ENCODE measurements at regions of chr12 and their contacts with region 1.

Region 1: DNA sequence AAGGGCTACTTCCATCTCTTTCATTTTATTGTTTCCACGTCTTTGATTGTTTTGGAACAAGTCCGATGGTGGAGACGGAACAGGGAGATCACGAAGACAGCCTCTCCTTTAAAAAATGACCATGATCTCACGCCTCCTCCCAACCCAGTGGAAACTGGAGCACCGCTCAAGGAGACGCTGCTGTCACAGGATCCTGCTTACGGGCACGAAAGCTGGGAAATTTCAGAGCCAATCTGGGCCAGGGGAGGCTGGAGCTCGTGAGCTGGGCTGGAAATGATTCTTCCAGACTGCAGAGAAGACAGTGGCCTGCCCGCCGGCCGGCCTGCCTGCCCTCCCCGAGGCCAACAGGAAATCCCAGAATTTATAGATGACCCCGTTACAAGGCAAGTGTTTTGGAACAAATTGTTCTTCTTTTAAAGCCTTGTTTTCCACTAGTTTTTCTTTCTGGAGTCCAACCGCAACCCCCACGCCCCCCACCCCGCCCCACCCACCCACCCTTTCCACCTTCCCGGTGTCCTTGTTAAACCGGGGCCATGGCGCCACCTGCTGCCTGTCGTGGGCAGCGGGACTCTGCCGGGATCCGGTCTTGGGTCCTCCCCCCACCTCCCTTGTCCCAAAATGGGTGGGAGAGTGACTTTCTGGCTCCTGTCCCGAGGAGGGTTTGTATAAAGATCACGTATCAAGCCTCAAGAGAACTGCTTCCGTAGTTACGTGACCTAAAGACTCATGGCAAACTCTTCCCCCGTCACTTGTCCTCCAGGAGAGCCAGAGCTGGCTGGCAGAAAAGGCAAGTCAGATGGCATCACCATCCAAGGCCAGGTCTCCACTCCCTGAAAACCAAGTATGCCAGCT is 40.3 kb downstream of the MAP1LC3B2 start:
- DNase-seq: peak; percentile 24 to 92
- H3K4me3 ChIP-seq: peak overlapping the region; percentile 43 to 59
- H3K27ac ChIP-seq: peak overlapping the region; percentile 73 to 79
- H3K4me1 ChIP-seq: peaks cover 4 to 22% of the 10 kb centered on the region in 2 donors
- H3K27me3 ChIP-seq: no peaks in the 10 kb centered on the region
- CTCF ChIP-seq: peak; percentile 22 to 86 (median 74)

Region 2: DNA sequence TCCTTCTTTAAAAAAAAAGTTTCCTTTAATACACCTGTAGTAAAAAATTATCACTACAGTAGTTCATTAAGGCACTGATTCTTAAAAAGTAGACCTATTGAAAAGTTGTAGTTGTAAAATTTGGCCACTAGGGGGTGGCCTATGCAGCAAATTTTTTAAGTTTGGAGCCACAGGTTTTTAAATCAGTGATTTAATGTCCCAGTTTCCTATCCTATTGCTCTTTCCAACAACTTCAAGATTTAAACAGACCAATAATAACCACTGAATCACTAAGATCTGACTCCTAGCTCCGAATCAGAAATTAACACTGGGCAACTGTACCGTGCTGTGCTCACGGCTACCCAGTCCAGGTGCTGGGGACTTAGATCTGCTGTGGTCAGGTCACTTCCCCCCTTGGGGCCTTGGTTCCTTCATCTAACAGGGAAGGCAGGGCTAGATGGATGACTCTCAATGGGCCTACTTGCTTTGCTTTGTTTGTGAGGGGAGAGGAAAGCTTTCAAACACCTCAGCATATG is 601.3 kb before region 1 on chr12:
- intact Hi-C with region 1: loop called (anchors 2 kb)
- DNase-seq: no peak
- H3K4me3 ChIP-seq: no peak overlapping the region
- H3K27ac ChIP-seq: peak overlapping the region in 1 of 2 donors; percentile 22
- H3K4me1 ChIP-seq: peaks cover 0 to 10% of the 10 kb centered on the region in 2 donors
- H3K27me3 ChIP-seq: no peaks in the 10 kb centered on the region
- CTCF ChIP-seq: peak; percentile 65 to 72 (median 69)

Region 3: GRCh38 chr12:116142936-116143898 is 456.3 kb before region 1 on chr12:
- intact Hi-C with region 1: loop called (anchors 1 kb)
- DNase-seq: no peak
- H3K4me3 ChIP-seq: peak overlapping the region in 1 of 2 donors; percentile 3
- H3K27ac ChIP-seq: peak overlapping the region; percentile 65
- H3K4me1 ChIP-seq: peaks cover 14 to 67% of the 10 kb centered on the region in 2 donors
- H3K27me3 ChIP-seq: no peaks in the 10 kb centered on the region
- CTCF ChIP-seq: no peak

Region 4: DNA sequence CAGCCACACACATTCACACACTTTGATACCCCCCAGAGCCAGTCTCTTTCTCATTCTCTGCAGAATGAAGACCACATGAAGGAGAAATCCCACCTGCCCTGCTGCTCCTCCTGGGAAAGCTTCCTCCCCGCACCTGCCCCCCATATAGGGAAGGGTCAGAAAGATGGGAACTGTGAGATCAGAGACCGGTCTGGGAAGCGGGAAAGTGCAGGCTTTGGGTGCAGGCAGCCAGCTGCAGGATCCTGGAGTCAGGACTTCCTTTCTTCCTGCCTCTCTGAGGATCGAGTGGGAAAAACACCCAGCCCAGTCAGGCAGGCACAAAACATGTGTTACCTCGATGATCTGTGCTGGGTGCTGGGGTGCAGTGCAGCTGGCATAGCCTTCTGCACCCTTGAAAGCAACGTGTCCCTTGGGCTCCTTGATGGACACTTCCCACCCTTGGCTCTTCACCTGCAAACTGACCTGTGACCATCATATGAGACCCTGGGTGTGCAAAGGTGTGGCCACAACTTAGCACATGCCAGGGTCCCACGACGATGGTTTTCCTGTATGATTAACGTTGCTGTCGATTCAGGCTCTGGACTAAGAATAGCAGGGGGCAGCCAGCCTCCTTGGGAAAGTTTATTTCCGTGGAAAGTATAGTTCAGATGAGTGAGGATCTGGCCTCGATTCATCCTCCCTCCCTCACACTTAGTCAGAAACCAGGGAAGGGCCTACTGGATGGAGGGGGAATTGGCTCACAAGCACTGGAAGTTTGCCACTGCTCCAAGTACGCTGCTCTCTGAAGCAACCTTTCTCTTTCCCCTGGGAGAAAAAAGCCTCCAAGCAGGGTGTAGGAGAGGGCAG is 216.6 kb before region 1 on chr12:
- intact Hi-C with region 1: loop called (anchors 5 kb)
- DNase-seq: peak; percentile 44 to 95
- H3K4me3 ChIP-seq: peak overlapping the region in 1 of 2 donors; percentile 24
- H3K27ac ChIP-seq: peak overlapping the region; percentile 73 to 81
- H3K4me1 ChIP-seq: peaks cover 12 to 32% of the 10 kb centered on the region in 2 donors
- H3K27me3 ChIP-seq: no peaks in the 10 kb centered on the region
- CTCF ChIP-seq: no peak

Region 5: DNA sequence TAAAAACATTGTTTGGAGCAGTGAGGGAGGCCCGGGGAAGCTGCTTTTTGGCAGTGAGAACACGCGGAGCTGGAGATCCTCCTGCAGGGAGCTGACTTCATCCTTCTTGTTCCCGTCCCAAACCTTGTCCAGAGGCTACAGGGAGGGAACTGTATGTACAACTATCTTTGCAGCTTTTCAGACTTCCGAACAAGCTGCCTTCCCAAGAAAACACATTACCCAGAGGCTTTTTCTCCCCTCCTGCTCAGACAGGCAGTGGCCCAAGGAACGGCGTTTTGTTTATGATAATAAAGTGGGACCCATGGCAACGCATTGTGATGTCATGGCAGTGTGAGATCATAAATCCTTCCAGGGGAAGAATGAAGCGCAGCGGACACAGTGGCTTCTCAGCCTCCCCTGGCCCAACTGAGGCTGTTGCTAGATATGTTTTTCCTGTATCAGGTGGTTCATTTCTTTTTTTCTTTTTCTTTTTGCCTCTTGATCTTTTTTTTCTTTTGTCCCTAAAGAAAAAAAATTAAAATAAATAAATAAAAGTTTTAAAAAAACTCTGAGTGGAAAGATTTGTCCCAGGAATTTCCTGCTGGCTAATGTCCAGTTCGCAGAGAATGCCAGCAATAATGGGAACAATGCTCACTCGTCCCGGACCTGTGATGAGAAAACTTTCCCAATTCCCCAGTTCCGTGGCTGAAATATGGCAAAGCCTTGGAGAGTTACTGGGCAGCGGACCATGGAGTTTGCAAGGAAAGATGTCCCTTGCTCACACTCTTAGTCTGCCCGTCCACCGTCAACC is 143.8 kb before region 1 on chr12:
- intact Hi-C with region 1: loop called (anchors 5 kb)
- DNase-seq: peak; percentile 69 to 96
- H3K4me3 ChIP-seq: peak overlapping the region in 1 of 2 donors; percentile 27
- H3K27ac ChIP-seq: peak overlapping the region; percentile 91 to 97
- H3K4me1 ChIP-seq: peaks cover 10 to 16% of the 10 kb centered on the region in 2 donors
- H3K27me3 ChIP-seq: no peaks in the 10 kb centered on the region
- CTCF ChIP-seq: no peak